Head of caudate nucleus (tissue), 42 donors: ENCODE measurements at regions of chr1 and their contacts with region 1.

Region 1: DNA sequence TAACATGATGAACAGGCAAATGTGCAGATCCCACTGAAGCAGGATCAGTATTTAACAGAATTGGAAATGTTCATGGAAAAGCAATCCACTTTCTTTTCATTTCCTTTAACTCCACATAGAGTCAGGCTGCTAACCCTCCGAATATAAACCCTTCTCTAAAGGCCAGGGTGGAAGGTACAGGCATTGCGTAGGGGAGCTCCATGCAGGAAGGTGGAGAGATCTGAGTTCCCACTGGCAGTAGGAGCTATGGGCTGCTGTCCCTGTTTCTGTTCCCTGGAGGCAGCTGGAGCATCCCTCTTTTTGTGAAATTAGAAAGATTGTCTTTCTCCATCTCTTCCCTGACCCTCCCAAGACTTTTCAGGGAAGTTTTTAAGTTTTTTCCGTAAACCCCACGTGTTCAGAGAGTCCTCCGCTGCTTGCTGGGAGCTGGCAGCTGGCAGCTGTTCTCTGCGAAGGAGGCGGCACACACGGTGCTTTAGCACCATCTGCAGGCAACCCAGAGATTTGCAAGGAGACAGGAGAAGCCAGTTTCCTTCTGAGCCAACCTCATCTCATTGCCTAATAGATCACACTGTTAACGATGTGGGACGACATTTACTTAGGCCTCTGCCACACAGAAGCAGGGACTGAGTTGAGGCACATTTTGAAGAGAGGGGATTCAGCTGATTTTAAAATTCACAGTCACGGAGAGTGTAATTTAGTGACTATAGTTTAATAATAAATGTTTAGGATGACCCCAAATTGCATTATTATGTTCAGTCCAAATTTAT is 55.4 kb upstream of the HOOK1 start:
- DNase-seq: peak; percentile 74 to 94 (median 86)

Region 2: DNA sequence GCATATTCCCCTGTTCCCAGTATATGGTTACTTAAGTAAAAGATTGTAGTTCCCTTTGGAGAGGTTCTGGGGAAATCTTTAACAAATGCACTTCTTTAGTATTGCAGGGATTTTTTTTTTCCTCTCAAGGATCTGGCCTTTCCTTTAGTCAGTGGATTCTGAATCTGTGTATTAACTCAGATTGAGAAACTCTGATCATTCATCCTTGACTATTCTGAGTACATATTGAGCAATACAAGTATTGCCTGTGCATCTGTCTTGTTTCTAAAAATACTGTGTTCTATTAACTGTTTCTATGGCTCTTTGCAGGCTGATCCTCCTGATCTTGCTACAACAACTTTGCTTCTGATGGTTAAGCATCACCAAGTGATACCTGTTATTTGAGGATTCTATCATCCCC is 530.2 kb before region 1 on chr1:
- intact Hi-C with region 1: no loop called
- DNase-seq: no peak

Region 3: GRCh38 chr1:59707178-59707791 is 52.1 kb before region 1 on chr1:
- intact Hi-C with region 1: loop called (anchors 2 kb)
- DNase-seq: peak in 30 of 42 donors; percentile 12 to 84 (median 43)